ENCODE measurements at regions of chr12 and their contacts with region 1.

Region 1: GRCh38 chr12:120649442-120650232 is 9.2 kb downstream of the CABP1 start:
- DNase-seq: no peak
- H3K4me3 ChIP-seq: no peak overlapping the region
- CTCF ChIP-seq: no peak
- POLR2A ChIP-seq: no peak

Region 2: DNA sequence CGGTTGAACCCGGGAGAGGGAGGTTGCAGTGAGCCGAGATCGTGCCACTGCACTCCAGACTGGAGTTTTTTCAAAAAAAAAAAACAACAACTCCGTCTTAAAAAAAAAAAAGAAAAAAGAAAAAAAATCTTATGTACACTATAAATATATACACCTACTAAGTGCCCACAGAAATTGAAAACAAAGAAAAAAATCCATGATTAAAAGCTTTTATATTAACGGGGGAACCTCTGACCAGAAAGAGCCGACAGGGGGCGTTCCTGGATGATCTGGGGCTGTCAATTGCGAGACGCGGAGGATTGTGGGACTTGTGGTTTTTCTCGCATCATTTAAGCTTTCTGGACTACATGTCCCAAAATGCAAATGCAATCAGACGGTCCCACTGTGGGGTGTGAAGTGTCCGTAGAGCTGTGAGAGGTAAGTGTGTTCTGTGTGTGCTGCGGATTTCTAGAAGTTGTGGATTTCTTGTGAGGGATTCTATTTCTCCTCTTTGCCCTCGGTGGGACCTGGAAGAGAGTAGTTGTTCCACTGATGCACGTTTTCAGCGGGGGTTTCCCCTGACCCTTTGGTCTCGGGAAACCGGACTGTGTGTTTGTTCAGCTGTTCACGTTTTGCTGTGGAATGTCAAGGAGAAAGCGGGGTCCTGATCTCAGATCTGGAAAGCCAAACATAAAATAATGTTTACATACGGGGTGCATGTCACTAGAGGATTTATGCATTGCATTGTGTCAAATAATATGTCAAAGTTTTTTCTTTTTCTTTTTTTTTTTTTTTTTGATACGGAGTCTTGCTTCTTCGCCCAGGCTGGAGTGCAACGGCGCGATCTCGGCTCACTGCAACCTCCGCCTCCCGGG is 347.4 kb before region 1 on chr12 and contains the start of gene SIRT4:
- intact Hi-C with region 1: no loop called
- DNase-seq: peak; percentile 92 to 96
- H3K4me3 ChIP-seq: peak within 1 kb of the TSS; percentile 50
- CTCF ChIP-seq: no peak
- POLR2A ChIP-seq: no peak
- total RNA-seq, gene SIRT4: 0.49 to 4.1 (median 2.8) TPM

Region 3: DNA sequence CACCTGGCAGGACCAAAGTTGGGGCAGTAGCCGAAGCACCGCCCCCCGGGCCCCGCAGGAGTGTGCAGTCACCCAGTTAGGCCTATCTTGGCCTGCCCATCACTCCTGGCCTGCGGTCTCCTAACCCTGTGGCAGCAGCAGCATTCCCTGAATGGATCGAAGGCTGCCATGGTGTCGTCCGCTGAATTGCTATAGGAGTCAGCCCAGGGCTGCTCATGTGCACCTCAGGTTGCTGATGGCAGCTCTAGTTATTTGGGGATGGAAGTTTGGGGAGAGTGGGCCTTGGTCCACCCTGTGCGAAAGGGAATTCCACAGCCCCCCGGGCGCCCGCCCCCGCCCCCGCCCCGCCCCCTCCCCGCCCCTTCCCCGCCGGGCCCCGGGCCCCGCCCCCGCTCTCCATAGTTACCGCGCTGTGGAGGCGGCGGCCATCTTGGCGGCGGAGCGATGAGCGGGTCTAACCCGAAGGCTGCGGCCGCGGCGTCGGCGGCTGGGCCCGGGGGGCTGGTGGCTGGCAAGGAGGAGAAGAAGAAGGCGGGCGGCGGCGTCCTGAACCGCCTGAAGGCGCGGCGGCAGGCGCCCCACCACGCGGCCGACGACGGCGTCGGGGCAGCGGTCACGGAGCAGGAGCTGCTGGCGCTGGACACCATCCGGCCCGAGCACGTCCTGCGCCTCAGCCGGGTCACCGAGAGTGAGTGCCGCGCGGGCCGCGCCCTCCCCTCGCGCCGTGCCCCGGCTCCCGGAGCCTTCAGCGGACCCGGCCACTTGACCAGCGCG is 60.6 kb after region 1 on chr12 and contains the start of gene UNC119B:
- intact Hi-C with region 1: loop called (anchors 5 kb)
- DNase-seq: peak; percentile 43 to 89
- H3K4me3 ChIP-seq: peak within 1 kb of the TSS; percentile 74
- CTCF ChIP-seq: no peak
- POLR2A ChIP-seq: no peak
- total RNA-seq, gene UNC119B: 5.0 to 20.3 (median 13.9) TPM

Region 4: GRCh38 chr12:120971299-120972179 is 321.9 kb after region 1 on chr12:
- intact Hi-C with region 1: loop called (anchors 5 kb)
- DNase-seq: peak in 1 of 2 donors; percentile 40
- H3K4me3 ChIP-seq: no peak overlapping the region
- CTCF ChIP-seq: no peak
- POLR2A ChIP-seq: no peak

Measured in lower leg skin (tissue), 4 donors.